Activated CD4-positive, alpha-beta memory T cell treated with anti-CD3 and anti-CD28 coated beads, Interleukin-2, amount 10 ng/mL, durations not matched to agents 7 days and 5 days (primary cell): ENCODE measurements at regions of chr3 and their contacts with region 1.

Region 1: DNA sequence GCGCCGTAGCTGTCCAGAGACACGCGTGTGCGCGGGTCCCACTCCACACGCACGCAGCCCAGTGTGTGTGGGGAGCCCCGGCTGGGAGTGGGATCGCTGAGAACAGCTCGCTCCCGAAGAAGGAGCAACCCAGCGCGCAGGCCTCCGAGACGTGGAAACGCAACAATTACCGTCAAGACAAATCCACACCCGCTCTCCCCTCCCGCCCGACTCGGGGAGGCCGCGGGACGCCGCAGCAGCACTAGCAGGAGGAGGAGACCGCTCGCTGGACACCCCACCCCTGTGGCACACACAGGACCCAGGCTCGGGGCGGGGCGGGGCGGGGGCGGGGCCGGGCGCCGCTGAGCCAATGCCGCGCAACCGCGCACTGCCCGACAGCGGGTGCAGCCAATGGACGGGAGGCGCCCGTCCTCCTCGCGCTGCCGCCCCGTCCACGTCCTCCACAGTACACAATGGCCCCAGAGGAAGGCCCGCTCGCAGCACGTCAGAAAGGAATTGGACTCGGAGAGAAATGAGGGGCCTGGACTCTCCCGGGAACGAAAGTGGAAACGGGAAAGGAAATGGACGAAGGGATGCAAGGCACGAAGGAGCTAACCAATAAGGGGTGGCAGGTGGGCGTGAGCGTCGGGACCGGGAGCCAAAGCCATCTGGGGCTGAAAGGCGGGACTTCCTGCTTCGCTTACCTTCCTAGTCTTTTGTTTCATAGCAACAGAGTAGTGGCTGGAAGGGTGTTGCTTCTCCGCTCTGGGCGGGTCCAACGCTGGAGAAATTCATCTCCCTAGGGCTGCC is at the start of gene CBLB:
- DNase-seq: peak; percentile 87
- H3K4me3 Mint-ChIP-seq: peak within 1 kb of the TSS; percentile 94
- H3K27ac Mint-ChIP-seq: peak within 1 kb of the TSS; percentile 78
- H3K4me1 Mint-ChIP-seq: peaks cover 39% of the 10 kb centered on the region
- H3K27me3 Mint-ChIP-seq: no peaks in the 10 kb centered on the region
- total RNA-seq, gene CBLB: 68.8 to 76.3 TPM

Region 2: DNA sequence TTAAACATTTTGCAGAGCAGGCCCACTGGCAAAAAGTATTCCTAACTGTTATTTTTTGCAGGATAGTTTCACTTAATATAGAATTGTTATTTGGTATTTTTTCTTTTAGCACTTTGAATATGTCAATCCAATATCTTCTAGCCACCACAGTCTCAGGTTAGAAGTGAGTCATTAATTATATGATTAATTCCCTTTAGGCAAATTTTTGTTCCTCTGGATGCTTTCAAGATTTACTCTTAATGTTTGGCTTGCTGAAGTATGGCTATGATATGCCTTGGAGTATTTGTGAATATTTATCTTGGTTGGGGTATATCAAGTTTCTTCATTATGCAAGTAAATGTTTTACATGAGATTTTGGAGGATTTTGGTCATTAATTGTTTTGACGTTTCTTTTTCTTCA is 654.4 kb before region 1 on chr3:
- CTCF ChIA-PET with region 1: no interaction called
- POLR2A ChIA-PET with region 1: no interaction called
- DNase-seq: no peak
- H3K4me3 Mint-ChIP-seq: no peak overlapping the region
- H3K27ac Mint-ChIP-seq: no peak overlapping the region
- H3K4me1 Mint-ChIP-seq: no peaks in the 10 kb centered on the region
- H3K27me3 Mint-ChIP-seq: no peaks in the 10 kb centered on the region

Region 3: GRCh38 chr3:105752744-105753415 is 116.1 kb before region 1 on chr3:
- CTCF ChIA-PET with region 1: interaction called, 3 read pairs
- POLR2A ChIA-PET with region 1: interaction called, 12 read pairs
- DNase-seq: peak; percentile 51
- H3K4me3 Mint-ChIP-seq: peak overlapping the region; percentile 47
- H3K27ac Mint-ChIP-seq: peak overlapping the region; percentile 100
- H3K4me1 Mint-ChIP-seq: peaks cover 69% of the 10 kb centered on the region
- H3K27me3 Mint-ChIP-seq: no peaks in the 10 kb centered on the region

Region 4: GRCh38 chr3:105829871-105830622 is 38.9 kb before region 1 on chr3:
- CTCF ChIA-PET with region 1: interaction called, 3 read pairs
- POLR2A ChIA-PET with region 1: interaction called, 28 read pairs
- DNase-seq: no peak
- H3K4me3 Mint-ChIP-seq: no peak overlapping the region
- H3K27ac Mint-ChIP-seq: peak overlapping the region; percentile 61
- H3K4me1 Mint-ChIP-seq: peaks cover 70% of the 10 kb centered on the region
- H3K27me3 Mint-ChIP-seq: no peaks in the 10 kb centered on the region

Region 5: GRCh38 chr3:105836533-105836932 is 32.4 kb before region 1 on chr3:
- CTCF ChIA-PET with region 1: interaction called, 5 read pairs
- POLR2A ChIA-PET with region 1: interaction called, 28 read pairs
- DNase-seq: peak; percentile 40
- H3K4me3 Mint-ChIP-seq: peak overlapping the region; percentile 55
- H3K27ac Mint-ChIP-seq: peak overlapping the region; percentile 72
- H3K4me1 Mint-ChIP-seq: peaks cover 59% of the 10 kb centered on the region
- H3K27me3 Mint-ChIP-seq: no peaks in the 10 kb centered on the region

Region 6: GRCh38 chr3:105883798-105884377 is 15.0 kb after region 1 on chr3:
- CTCF ChIA-PET with region 1: interaction called, 4 read pairs
- POLR2A ChIA-PET with region 1: interaction called, 21 read pairs
- DNase-seq: no peak
- H3K4me3 Mint-ChIP-seq: no peak overlapping the region
- H3K27ac Mint-ChIP-seq: no peak overlapping the region
- H3K4me1 Mint-ChIP-seq: peaks cover 18% of the 10 kb centered on the region
- H3K27me3 Mint-ChIP-seq: no peaks in the 10 kb centered on the region